ENCODE measurements at regions of chr2 and their contacts with region 1.

Region 1: GRCh38 chr2:62306751-62307468 is 111.0 kb downstream of the B3GNT2 start:
- DNase-seq: peak; percentile 95
- ATAC-seq: peak; percentile 65
- H3K4me3 ChIP-seq: peak overlapping the region; percentile 38; the same call in 1 of the 2 replicates
- H3K27ac ChIP-seq: peak overlapping the region; percentile 99
- H3K4me1 ChIP-seq: peaks cover 92% of the 10 kb centered on the region
- H3K27me3 ChIP-seq: no peaks in the 10 kb centered on the region
- CTCF ChIP-seq: no peak
- EP300 ChIP-seq: peak; percentile 38 to 45; a peak in 2 of 4 replicates
- POLR2A ChIP-seq: peak; percentile 45; the same call in 1 of the 2 replicates
- RAD21 ChIP-seq: no peak

Region 2: DNA sequence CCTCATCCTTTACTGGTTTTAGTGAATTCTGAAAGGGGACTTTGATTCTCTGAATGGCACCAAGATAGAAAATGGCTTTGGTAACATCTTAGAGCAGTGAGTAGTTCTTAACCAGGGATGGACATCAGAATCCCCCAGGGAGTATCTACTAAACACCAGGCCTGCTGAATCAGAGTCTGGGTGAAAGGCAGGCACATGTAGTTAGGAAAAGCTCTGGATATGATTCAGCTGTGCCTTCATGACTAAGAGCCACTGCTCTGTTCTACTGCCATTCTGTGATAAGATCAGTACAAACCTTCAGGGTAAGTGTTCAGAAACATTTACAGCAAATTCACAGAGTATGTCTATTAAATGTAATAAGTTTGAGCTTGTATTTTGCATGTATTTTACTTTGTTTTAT is 157.2 kb before region 1 on chr2:
- CTCF ChIA-PET with region 1: interaction called, 8 read pairs
- POLR2A ChIA-PET with region 1: interaction called, 6 read pairs
- RAD21 ChIA-PET with region 1: interaction called, 10 read pairs
- SMC1A ChIA-PET with region 1: interaction called, 12 read pairs
- in situ Hi-C with region 1: loop called (anchors 5 kb)
- intact Hi-C with region 1: loop called (anchors 5 kb)
- DNase-seq: no peak
- ATAC-seq: peak; percentile 23
- H3K4me3 ChIP-seq: no peak overlapping the region; the same call in 1 of the 2 replicates
- H3K27ac ChIP-seq: peak overlapping the region; percentile 91
- H3K4me1 ChIP-seq: peaks cover 43% of the 10 kb centered on the region
- H3K27me3 ChIP-seq: no peaks in the 10 kb centered on the region
- CTCF ChIP-seq: no peak
- EP300 ChIP-seq: no peak
- POLR2A ChIP-seq: no peak
- RAD21 ChIP-seq: no peak

Region 3: DNA sequence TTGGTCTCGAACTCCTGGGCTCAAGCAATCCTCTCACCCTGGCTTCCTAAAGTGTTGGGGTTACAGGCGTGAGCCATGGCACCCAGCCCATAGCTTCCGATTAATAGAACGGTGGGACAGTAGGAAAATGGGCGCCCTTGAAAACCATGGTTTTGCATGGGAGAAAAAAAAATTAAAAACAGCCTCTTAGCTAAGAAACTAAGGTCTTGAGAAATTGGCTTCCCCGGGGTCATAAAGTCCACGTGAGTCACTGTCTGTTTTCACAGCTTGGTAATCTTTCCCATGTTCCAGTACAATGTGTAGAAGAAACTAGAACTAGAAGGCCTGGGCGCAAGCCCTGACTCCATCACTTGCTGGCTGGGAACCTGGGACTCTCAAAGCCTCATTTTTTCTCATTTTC is 90.3 kb before region 1 on chr2:
- CTCF ChIA-PET with region 1: interaction called, 5 read pairs
- POLR2A ChIA-PET with region 1: interaction called, 9 read pairs
- RAD21 ChIA-PET with region 1: interaction called, 4 read pairs
- SMC1A ChIA-PET with region 1: interaction called, 10 read pairs
- in situ Hi-C with region 1: no loop called
- intact Hi-C with region 1: no loop called
- DNase-seq: no peak
- ATAC-seq: no peak
- H3K4me3 ChIP-seq: no peak overlapping the region
- H3K27ac ChIP-seq: no peak overlapping the region
- H3K4me1 ChIP-seq: peaks cover 45% of the 10 kb centered on the region
- H3K27me3 ChIP-seq: no peaks in the 10 kb centered on the region
- CTCF ChIP-seq: no peak
- EP300 ChIP-seq: no peak
- POLR2A ChIP-seq: no peak
- RAD21 ChIP-seq: no peak

Region 4: GRCh38 chr2:62321380-62322289 is 14.7 kb after region 1 on chr2:
- CTCF ChIA-PET with region 1: interaction called, 4 read pairs
- POLR2A ChIA-PET with region 1: interaction called, 11 read pairs
- RAD21 ChIA-PET with region 1: interaction called, 18 read pairs
- SMC1A ChIA-PET with region 1: interaction called, 23 read pairs
- in situ Hi-C with region 1: no loop called
- intact Hi-C with region 1: no loop called
- DNase-seq: no peak
- ATAC-seq: peak; percentile 68
- H3K4me3 ChIP-seq: no peak overlapping the region
- H3K27ac ChIP-seq: peak overlapping the region; percentile 77
- H3K4me1 ChIP-seq: peaks cover 32% of the 10 kb centered on the region
- H3K27me3 ChIP-seq: no peaks in the 10 kb centered on the region
- CTCF ChIP-seq: no peak
- EP300 ChIP-seq: no peak
- POLR2A ChIP-seq: no peak
- RAD21 ChIP-seq: no peak

Region 5: GRCh38 chr2:62348700-62349099 is 41.8 kb after region 1 on chr2:
- CTCF ChIA-PET with region 1: interaction called, 3 read pairs
- POLR2A ChIA-PET with region 1: interaction called, 5 read pairs
- RAD21 ChIA-PET with region 1: interaction called, 11 read pairs
- SMC1A ChIA-PET with region 1: interaction called, 467 read pairs
- in situ Hi-C with region 1: no loop called
- intact Hi-C with region 1: loop called (anchors 1 kb)
- DNase-seq: peak; percentile 78
- ATAC-seq: peak; percentile 57
- H3K4me3 ChIP-seq: no peak overlapping the region
- H3K27ac ChIP-seq: peak overlapping the region; percentile 84
- H3K4me1 ChIP-seq: peaks cover 38% of the 10 kb centered on the region
- H3K27me3 ChIP-seq: no peaks in the 10 kb centered on the region
- CTCF ChIP-seq: no peak
- EP300 ChIP-seq: peak in 1 of 2 experiments; percentile 53; a peak in 1 of 4 replicates
- POLR2A ChIP-seq: no peak
- RAD21 ChIP-seq: no peak

Region 6: GRCh38 chr2:62391696-62392095 is 84.8 kb after region 1 on chr2:
- CTCF ChIA-PET with region 1: no interaction called
- POLR2A ChIA-PET with region 1: no interaction called
- RAD21 ChIA-PET with region 1: no interaction called
- SMC1A ChIA-PET with region 1: no interaction called
- in situ Hi-C with region 1: no loop called
- intact Hi-C with region 1: no loop called
- DNase-seq: no peak
- ATAC-seq: no peak
- H3K4me3 ChIP-seq: no peak overlapping the region
- H3K27ac ChIP-seq: no peak overlapping the region
- H3K4me1 ChIP-seq: no peaks in the 10 kb centered on the region
- H3K27me3 ChIP-seq: no peaks in the 10 kb centered on the region
- CTCF ChIP-seq: no peak
- EP300 ChIP-seq: no peak
- POLR2A ChIP-seq: no peak
- RAD21 ChIP-seq: no peak

Measured in GM12878 (cell line).